CD8-positive, alpha-beta T cell (primary cell): ENCODE measurements at regions of chr1 and their contacts with region 1.

Region 1: DNA sequence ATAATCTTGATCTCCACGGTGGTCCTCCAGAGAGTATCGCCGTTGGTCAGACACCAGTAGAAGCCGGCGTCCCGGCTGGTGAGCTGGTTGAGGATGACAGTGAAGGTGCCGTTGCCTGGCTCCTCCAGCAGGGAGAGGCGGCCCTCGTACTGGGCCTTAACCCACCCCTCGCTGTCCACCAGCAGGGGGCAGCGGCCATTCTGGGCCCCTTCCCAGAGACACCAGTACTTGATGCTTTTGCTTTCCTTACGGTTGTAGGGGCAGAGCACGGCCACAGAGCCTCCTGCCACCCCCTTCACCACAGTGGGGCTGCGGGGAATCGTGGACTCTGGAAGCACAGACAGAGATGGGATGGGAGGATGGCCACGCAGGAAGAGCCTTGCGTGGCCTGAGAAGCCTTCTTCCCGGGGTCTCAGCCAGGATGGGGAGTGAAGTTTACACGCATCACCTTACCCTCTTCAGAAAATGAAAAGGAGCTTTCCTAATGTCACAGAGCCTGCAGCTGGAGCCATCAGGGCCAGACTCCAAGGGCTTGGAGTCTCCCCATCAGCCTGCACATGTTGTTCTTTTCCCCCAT is 10.7 kb downstream of the PIGR start:
- DNase-seq: peak in 6 of 9 experiments; percentile 41 to 65 (median 52)
- ATAC-seq: peak; percentile 45
- H3K4me3 ChIP-seq: no peak overlapping the region
- H3K4me3 Mint-ChIP-seq: no peak overlapping the region
- H3K27ac ChIP-seq: no peak overlapping the region
- H3K27ac Mint-ChIP-seq: no peak overlapping the region
- H3K4me1 ChIP-seq: peaks cover 20% of the 10 kb centered on the region
- H3K4me1 Mint-ChIP-seq: peaks cover 26% of the 10 kb centered on the region
- H3K27me3 ChIP-seq: no peaks in the 10 kb centered on the region
- H3K27me3 Mint-ChIP-seq: no peaks in the 10 kb centered on the region
- CTCF ChIP-seq: peak; percentile 48

Region 2: GRCh38 chr1:206651958-206652890 is 283.4 kb before region 1 on chr1:
- CTCF ChIA-PET with region 1: no interaction called
- POLR2A ChIA-PET with region 1: no interaction called
- intact Hi-C with region 1: no loop called
- DNase-seq: no peak
- ATAC-seq: no peak
- H3K4me3 ChIP-seq: no peak overlapping the region
- H3K4me3 Mint-ChIP-seq: no peak overlapping the region
- H3K27ac ChIP-seq: no peak overlapping the region
- H3K27ac Mint-ChIP-seq: no peak overlapping the region
- H3K4me1 ChIP-seq: no peaks in the 10 kb centered on the region
- H3K4me1 Mint-ChIP-seq: no peaks in the 10 kb centered on the region
- H3K27me3 ChIP-seq: no peaks in the 10 kb centered on the region
- H3K27me3 Mint-ChIP-seq: peaks cover 6% of the 10 kb centered on the region
- CTCF ChIP-seq: no peak

Region 3: GRCh38 chr1:206949208-206949607 is 13.6 kb after region 1 on chr1:
- CTCF ChIA-PET with region 1: interaction called, 29 read pairs
- POLR2A ChIA-PET with region 1: no interaction called
- intact Hi-C with region 1: no loop called
- DNase-seq: no peak
- ATAC-seq: no peak
- H3K4me3 ChIP-seq: no peak overlapping the region
- H3K4me3 Mint-ChIP-seq: no peak overlapping the region
- H3K27ac ChIP-seq: no peak overlapping the region
- H3K27ac Mint-ChIP-seq: no peak overlapping the region
- H3K4me1 ChIP-seq: no peaks in the 10 kb centered on the region
- H3K4me1 Mint-ChIP-seq: peaks cover 4% of the 10 kb centered on the region
- H3K27me3 ChIP-seq: no peaks in the 10 kb centered on the region
- H3K27me3 Mint-ChIP-seq: no peaks in the 10 kb centered on the region
- CTCF ChIP-seq: no peak

Region 4: DNA sequence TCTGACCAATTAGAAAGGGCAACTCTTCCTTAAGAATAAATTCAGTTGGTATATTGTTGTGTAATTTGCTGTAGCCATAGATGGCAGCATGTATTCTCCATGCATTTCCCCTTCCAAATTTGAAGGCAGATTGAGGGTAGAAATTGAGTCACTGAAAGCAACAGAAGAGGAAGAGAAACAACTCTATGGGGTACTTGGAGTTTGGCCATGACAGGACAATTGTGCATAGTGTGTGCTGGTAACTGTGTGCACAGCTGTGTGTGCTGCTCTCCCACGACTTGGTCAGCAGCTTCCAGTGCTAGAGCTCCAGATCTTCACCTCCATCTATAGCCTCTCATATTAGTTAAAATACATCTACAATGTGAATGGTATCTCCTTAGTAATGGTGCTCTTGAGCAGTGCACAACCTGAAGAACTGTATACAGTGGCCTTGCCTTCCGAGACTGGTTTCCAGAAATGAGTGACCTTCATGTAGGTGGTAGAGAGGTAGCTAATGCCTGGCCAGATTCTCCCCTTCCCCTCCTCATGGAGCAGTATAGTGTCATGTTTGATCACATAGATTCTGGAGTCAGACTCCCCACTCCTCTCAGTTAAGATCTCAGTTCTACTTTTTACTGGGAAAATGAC is 35.6 kb after region 1 on chr1:
- CTCF ChIA-PET with region 1: interaction called, 28 read pairs
- POLR2A ChIA-PET with region 1: interaction called, 3 read pairs
- intact Hi-C with region 1: loop called in 1 of 2 experiments (anchors 5 kb)
- DNase-seq: no peak
- ATAC-seq: no peak
- H3K4me3 ChIP-seq: no peak overlapping the region
- H3K4me3 Mint-ChIP-seq: no peak overlapping the region
- H3K27ac ChIP-seq: no peak overlapping the region
- H3K27ac Mint-ChIP-seq: no peak overlapping the region
- H3K4me1 ChIP-seq: peaks cover 13% of the 10 kb centered on the region
- H3K4me1 Mint-ChIP-seq: peaks cover 16% of the 10 kb centered on the region
- H3K27me3 ChIP-seq: no peaks in the 10 kb centered on the region
- H3K27me3 Mint-ChIP-seq: no peaks in the 10 kb centered on the region
- CTCF ChIP-seq: no peak

Region 5: GRCh38 chr1:207058878-207059867 is 123.6 kb after region 1 on chr1:
- CTCF ChIA-PET with region 1: no interaction called
- POLR2A ChIA-PET with region 1: no interaction called
- intact Hi-C with region 1: loop called in 1 of 2 experiments (anchors 5 kb)
- DNase-seq: no peak
- ATAC-seq: no peak
- H3K4me3 ChIP-seq: no peak overlapping the region
- H3K4me3 Mint-ChIP-seq: no peak overlapping the region
- H3K27ac ChIP-seq: no peak overlapping the region
- H3K27ac Mint-ChIP-seq: no peak overlapping the region
- H3K4me1 ChIP-seq: no peaks in the 10 kb centered on the region
- H3K4me1 Mint-ChIP-seq: peaks cover 2% of the 10 kb centered on the region
- H3K27me3 ChIP-seq: no peaks in the 10 kb centered on the region
- H3K27me3 Mint-ChIP-seq: no peaks in the 10 kb centered on the region
- CTCF ChIP-seq: no peak